ENCODE measurements at regions of chr3 and their contacts with region 1.

Region 1: GRCh38 chr3:59049671-59050331 is at the start of gene CFAP20DC:
- H3K4me3 Mint-ChIP-seq: peak within 1 kb of the TSS; percentile 79
- H3K27ac Mint-ChIP-seq: peak within 1 kb of the TSS; percentile 70
- H3K4me1 Mint-ChIP-seq: no peaks in the 10 kb centered on the region
- H3K27me3 Mint-ChIP-seq: no peaks in the 10 kb centered on the region

Region 2: GRCh38 chr3:58640700-58641372 is 409.0 kb before region 1 on chr3:
- intact Hi-C with region 1: loop called (anchors 1 kb)
- H3K4me3 Mint-ChIP-seq: no peak overlapping the region
- H3K27ac Mint-ChIP-seq: no peak overlapping the region
- H3K4me1 Mint-ChIP-seq: no peaks in the 10 kb centered on the region
- H3K27me3 Mint-ChIP-seq: no peaks in the 10 kb centered on the region

Region 3: GRCh38 chr3:58829321-58830000 is 220.3 kb before region 1 on chr3:
- intact Hi-C with region 1: loop called (anchors 5 kb)
- H3K4me3 Mint-ChIP-seq: no peak overlapping the region
- H3K27ac Mint-ChIP-seq: no peak overlapping the region
- H3K4me1 Mint-ChIP-seq: no peaks in the 10 kb centered on the region
- H3K27me3 Mint-ChIP-seq: no peaks in the 10 kb centered on the region

Region 4: GRCh38 chr3:58994746-58995330 is 55.0 kb before region 1 on chr3:
- intact Hi-C with region 1: loop called (anchors 5 kb)
- H3K4me3 Mint-ChIP-seq: no peak overlapping the region
- H3K27ac Mint-ChIP-seq: no peak overlapping the region
- H3K4me1 Mint-ChIP-seq: peaks cover 6% of the 10 kb centered on the region
- H3K27me3 Mint-ChIP-seq: no peaks in the 10 kb centered on the region

Measured in dendritic cell treated with granulocyte-macrophage colony-stimulating factor and Interleukin-4, amounts not matched to agents 40 ng/mL and 50 ng/mL, for 4 days (primary cell).